ENCODE measurements at regions of chr16 and their contacts with region 1.

Region 1: GRCh38 chr16:29848420-29849297 is 14.4 kb downstream of the CDIPT start:
- DNase-seq: peak; percentile 79 to 88 (median 83)
- H3K4me3 ChIP-seq: no peak overlapping the region
- H3K27ac ChIP-seq: peak overlapping the region in 1 of 2 donors; percentile 64
- H3K4me1 ChIP-seq: peaks cover 5% of the 10 kb centered on the region
- H3K27me3 ChIP-seq: no peaks in the 10 kb centered on the region
- CTCF ChIP-seq: peak; percentile 78 to 88 (median 84)
- EP300 ChIP-seq: no peak
- POLR2A ChIP-seq: no peak

Region 2: DNA sequence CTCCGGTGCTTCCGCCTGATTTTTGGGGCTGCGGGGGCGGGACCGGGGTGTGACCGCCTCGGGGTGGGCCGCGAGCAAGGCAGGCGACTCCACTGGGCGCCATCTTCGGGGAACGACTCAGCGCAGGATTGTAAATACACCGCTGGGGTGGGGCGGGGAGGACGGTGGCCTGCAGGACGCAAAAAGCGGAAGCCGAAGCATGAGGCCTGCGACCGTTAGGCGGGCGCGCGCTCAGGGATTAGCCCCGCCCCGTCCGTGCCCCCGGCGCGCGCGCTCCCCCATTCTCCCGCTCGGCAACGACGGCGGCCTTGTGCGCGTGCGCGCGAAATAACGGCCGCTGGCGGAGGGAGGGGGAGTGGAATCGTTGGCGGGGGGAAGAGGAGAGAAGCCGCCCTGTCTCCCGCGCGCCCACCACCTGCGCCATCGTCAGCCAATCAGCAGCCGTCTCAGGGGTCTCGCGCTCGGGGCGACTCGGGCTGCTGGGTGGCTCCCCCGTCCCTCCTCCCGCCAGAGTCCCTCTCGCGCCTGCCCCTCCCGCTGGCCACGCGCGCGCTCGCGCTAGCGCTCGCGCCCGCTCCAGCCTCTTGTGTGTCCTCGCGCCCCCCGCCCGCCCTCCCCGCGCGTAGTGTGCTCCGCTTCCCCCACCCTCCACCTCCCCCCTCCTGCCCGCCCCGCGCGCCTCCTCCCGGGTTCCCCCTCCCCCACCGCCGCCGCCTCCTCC is 43.1 kb before region 1 on chr16:
- intact Hi-C with region 1: loop called in 3 of 4 experiments (anchors 2 to 5 kb)
- DNase-seq: peak; percentile 97 to 98 (median 98)
- H3K4me3 ChIP-seq: peak overlapping the region; percentile 68
- H3K27ac ChIP-seq: peak overlapping the region; percentile 99
- H3K4me1 ChIP-seq: peaks cover 14% of the 10 kb centered on the region
- H3K27me3 ChIP-seq: no peaks in the 10 kb centered on the region
- CTCF ChIP-seq: peak in 2 of 3 donors; percentile 30 to 47
- EP300 ChIP-seq: no peak
- POLR2A ChIP-seq: peak; percentile 94

Region 3: DNA sequence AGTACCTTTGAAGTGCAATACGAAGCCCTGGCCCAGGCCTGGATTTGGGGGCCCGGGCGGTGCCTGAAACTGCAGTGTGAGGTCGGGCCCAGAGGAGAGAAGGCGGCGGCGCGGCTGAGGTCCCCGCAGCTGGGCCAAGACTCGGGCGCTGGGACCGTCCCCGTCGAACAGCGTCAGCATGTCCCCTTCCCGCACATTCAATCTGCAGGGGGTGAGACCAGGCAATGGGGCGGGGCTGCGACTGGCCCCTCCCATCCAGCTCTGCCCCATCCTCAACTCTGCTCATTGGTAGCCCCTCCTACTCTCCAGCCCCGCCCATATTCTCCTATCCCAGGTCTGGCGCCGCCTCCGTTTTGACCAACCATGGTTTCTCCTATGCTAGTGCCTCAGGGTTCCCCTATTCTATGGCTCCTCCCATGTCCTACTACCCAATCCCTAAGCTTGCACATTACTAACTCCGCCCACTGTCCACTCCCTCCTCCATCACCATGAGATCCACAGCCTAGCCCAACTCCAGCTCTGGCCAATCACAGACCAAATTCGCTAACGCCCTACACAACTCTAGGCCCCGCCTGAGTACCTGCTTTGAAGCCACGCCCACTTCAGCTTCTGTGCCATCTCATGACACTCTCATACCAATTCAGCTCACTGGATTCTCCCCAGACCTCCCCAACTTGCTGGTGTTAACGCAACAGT is 28.8 kb after region 1 on chr16:
- intact Hi-C with region 1: no loop called
- DNase-seq: no peak
- H3K4me3 ChIP-seq: no peak overlapping the region
- H3K27ac ChIP-seq: no peak overlapping the region
- H3K4me1 ChIP-seq: no peaks in the 10 kb centered on the region
- H3K27me3 ChIP-seq: no peaks in the 10 kb centered on the region
- CTCF ChIP-seq: no peak
- EP300 ChIP-seq: no peak
- POLR2A ChIP-seq: no peak

Measured in ovary (tissue), 10 donors.